HCT116 (cell line): ENCODE measurements at regions of chr14 and their contacts with region 1.

Region 1: GRCh38 chr14:100850841-100851585 is 25.1 kb downstream of the MEG3 start:
- DNase-seq: peak; percentile 74
- ATAC-seq: peak; percentile 100
- H3K4me3 ChIP-seq: no peak overlapping the region
- H3K27ac ChIP-seq: no peak overlapping the region
- H3K4me1 ChIP-seq: peaks cover 0 to 17% of the 10 kb centered on the region in 2 experiments; a peak in 3 of 4 replicates
- H3K27me3 ChIP-seq: no peaks in the 10 kb centered on the region
- CTCF ChIP-seq: peak; percentile 94 to 97 (median 97)
- POLR2A ChIP-seq: no peak
- RAD21 ChIP-seq: peak; percentile 97

Region 2: GRCh38 chr14:100662879-100663760 is 187.9 kb before region 1 on chr14:
- CTCF ChIA-PET with region 1: interaction called, 3 read pairs
- POLR2A ChIA-PET with region 1: no interaction called
- RAD21 ChIA-PET with region 1: no interaction called
- intact Hi-C with region 1: loop called (anchors 1 kb)
- DNase-seq: peak; percentile 87
- ATAC-seq: peak; percentile 78
- H3K4me3 ChIP-seq: peak overlapping the region; percentile 28 to 51
- H3K27ac ChIP-seq: peak overlapping the region; percentile 46
- H3K4me1 ChIP-seq: peaks cover 4 to 65% of the 10 kb centered on the region in 2 experiments; a peak in 3 of 4 replicates
- H3K27me3 ChIP-seq: no peaks in the 10 kb centered on the region
- CTCF ChIP-seq: peak in 2 of 3 experiments; percentile 90 to 98; a peak in 4 of 6 replicates
- POLR2A ChIP-seq: no peak
- RAD21 ChIP-seq: no peak

Region 3: GRCh38 chr14:101628471-101628966 is 777.5 kb after region 1 on chr14:
- CTCF ChIA-PET with region 1: interaction called, 3 read pairs
- POLR2A ChIA-PET with region 1: no interaction called
- RAD21 ChIA-PET with region 1: no interaction called
- intact Hi-C with region 1: loop called (anchors 1 kb)
- DNase-seq: peak; percentile 31
- ATAC-seq: peak; percentile 95
- H3K4me3 ChIP-seq: no peak overlapping the region
- H3K27ac ChIP-seq: peak overlapping the region; percentile 24; the same call in 1 of the 2 replicates
- H3K4me1 ChIP-seq: peaks cover 7 to 9% of the 10 kb centered on the region in 2 experiments; a peak in 3 of 4 replicates
- H3K27me3 ChIP-seq: no peaks in the 10 kb centered on the region
- CTCF ChIP-seq: peak; percentile 73 to 79 (median 79)
- POLR2A ChIP-seq: no peak
- RAD21 ChIP-seq: peak; percentile 97

Region 4: GRCh38 chr14:101665515-101666078 is 814.6 kb after region 1 on chr14:
- CTCF ChIA-PET with region 1: interaction called, 3 read pairs
- POLR2A ChIA-PET with region 1: no interaction called
- RAD21 ChIA-PET with region 1: no interaction called
- intact Hi-C with region 1: loop called (anchors 1 kb)
- DNase-seq: peak; percentile 57
- ATAC-seq: peak; percentile 98
- H3K4me3 ChIP-seq: no peak overlapping the region
- H3K27ac ChIP-seq: no peak overlapping the region
- H3K4me1 ChIP-seq: no peaks in the 10 kb centered on the region
- H3K27me3 ChIP-seq: no peaks in the 10 kb centered on the region
- CTCF ChIP-seq: peak; percentile 67 to 76 (median 69); a peak in 5 of 6 replicates
- POLR2A ChIP-seq: no peak
- RAD21 ChIP-seq: peak; percentile 90